ENCODE measurements at regions of chr3 and their contacts with region 1.

Region 1: DNA sequence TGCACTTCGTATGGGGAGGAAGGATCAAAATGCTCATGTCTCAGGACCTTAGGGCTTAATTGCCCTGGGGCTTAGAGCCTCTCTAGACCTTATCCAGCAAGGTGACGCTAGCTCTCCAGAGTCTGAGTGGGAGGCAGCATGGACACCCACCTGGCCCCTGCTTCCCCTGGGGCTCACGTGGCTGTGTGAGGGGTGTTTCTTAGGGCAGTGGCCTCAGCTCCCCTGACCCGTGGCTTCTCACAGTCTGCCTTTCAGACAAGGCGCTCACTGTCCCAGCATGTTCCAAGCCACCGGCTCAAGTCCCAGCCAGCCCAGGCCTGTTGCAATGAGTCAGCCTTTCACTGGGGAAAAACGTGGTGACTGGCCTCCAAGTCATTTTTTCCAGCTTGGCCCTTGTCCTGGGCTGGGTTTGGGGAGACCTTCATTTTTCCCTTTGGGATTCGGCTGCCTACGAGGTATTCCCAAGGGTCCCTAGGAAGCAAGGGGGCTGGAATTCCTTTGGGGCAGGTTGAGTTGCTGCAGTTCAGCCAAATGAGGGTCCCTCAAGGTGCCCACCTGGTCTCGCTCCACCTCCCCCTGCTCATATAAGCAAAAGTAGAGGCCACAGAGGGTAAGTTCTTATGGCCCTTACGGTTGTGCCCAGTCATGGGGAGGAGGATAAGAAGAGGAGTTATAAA is 15.7 kb downstream of the BHLHE40 start:
- DNase-seq: peak; percentile 55 to 81
- H3K4me3 ChIP-seq: no peak overlapping the region
- H3K27ac ChIP-seq: peak overlapping the region; percentile 37; the same call in 1 of the 2 replicates
- H3K4me1 ChIP-seq: peaks cover 14% of the 10 kb centered on the region; the same call in 1 of the 2 replicates
- H3K27me3 ChIP-seq: no peaks in the 10 kb centered on the region
- CTCF ChIP-seq: no peak

Region 2: GRCh38 chr3:5026331-5027218 is 31.6 kb after region 1 on chr3:
- CTCF ChIA-PET with region 1: no interaction called
- POLR2A ChIA-PET with region 1: interaction called, 5 read pairs
- intact Hi-C with region 1: loop called (anchors 1 kb)
- DNase-seq: peak; percentile 64 to 87
- H3K4me3 ChIP-seq: peak overlapping the region; percentile 48; the same call in 1 of the 2 replicates
- H3K27ac ChIP-seq: peak overlapping the region; percentile 73
- H3K4me1 ChIP-seq: peaks cover 33% of the 10 kb centered on the region
- H3K27me3 ChIP-seq: no peaks in the 10 kb centered on the region
- CTCF ChIP-seq: peak; percentile 61

Region 3: GRCh38 chr3:5057857-5058324 is 62.9 kb after region 1 on chr3:
- CTCF ChIA-PET with region 1: no interaction called
- POLR2A ChIA-PET with region 1: no interaction called
- intact Hi-C with region 1: no loop called
- DNase-seq: peak; percentile 71 to 74
- H3K4me3 ChIP-seq: no peak overlapping the region
- H3K27ac ChIP-seq: no peak overlapping the region
- H3K4me1 ChIP-seq: peaks cover 6% of the 10 kb centered on the region
- H3K27me3 ChIP-seq: no peaks in the 10 kb centered on the region
- CTCF ChIP-seq: peak; percentile 73

Measured in PC-9 (cell line).